ENCODE measurements at regions of chr19 and their contacts with region 1.

Region 1: DNA sequence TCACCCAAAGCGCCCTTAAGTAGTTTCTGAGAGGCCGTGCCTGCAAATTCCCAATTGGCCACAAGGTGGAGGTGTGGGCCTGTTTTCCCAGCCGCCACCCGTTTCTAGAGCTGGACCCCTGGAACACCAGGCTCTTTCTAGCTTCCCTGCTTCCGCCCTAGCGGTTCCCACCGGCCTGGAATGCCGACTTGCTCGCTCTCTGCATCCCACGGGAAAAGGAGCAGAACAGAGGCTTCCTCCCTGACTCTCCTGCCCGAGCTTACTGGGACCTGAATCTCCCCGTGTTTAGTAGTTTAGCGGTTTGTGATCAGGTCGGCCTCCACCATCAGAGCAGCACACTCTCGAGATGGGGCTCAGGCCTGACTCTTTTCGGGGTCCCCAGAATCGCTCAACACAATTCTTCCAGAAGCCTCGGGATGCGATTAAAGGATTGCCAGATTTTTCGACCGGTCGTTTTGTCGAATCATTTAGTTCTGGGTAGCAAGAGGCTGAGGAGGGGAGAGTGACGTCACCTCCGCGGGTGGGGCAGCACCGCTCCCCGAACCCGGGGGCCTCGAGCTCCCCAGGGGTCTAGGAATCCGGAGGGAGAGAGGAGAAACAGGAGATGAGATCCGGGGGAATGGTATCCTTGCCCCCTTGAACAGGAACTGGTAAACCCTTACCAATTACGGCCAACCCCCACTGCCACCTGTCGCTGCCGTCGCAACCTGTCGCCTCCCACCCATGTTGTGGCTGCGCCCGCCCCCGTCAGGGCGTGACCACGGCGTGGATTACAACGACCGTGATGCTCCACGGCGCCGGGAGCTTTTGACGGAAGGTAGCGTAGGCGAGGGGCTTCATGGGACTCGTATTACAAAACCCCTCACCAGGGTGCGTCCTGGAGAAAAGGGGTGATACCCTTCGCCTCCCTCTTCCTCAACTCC is 8.0 kb downstream of the NAPSA start:
- DNase-seq: peak; percentile 87
- ATAC-seq: peak; percentile 81
- H3K4me3 Mint-ChIP-seq: peak overlapping the region; percentile 93
- H3K27ac Mint-ChIP-seq: peak overlapping the region; percentile 98
- H3K4me1 Mint-ChIP-seq: peaks cover 32% of the 10 kb centered on the region
- H3K27me3 Mint-ChIP-seq: peaks cover 2% of the 10 kb centered on the region

Region 2: DNA sequence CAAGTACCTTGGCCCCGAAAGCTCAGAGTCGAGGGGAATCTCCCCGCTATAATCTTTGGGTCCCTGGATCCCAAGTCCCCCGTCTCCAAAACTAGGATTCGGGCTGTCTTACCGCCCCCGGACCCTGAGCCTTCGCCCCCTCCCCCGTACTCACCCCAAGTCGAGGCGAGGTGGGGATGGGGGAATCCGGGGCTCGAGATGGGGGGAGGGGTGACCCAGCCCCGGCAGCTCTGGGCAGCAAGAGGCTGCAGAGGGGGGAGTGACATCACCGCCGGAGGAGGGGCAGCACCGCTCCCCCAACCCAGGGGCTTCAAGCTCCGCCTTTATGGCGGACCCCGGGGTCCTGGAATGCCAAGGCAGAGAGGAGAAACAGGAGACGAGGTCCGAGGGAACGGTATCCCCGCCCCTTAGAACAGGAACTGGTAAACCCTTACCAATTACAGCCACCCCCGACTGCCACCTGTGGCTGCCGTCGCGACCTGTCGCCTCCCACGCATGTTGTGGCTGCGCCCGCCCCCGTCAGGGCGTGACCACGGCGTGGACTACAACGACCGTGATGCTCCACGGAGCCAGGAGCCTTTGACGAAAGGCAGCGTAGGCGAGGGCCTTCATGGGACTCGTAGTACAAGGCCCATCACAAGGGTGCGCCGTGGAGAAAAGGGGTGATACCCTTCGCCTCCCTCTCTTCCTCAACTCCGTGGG is 24.3 kb before region 1 on chr19:
- POLR2A ChIA-PET with region 1: interaction called, 12 read pairs
- DNase-seq: peak; percentile 88
- ATAC-seq: peak; percentile 72
- H3K4me3 Mint-ChIP-seq: peak overlapping the region; percentile 80
- H3K27ac Mint-ChIP-seq: peak overlapping the region; percentile 91
- H3K4me1 Mint-ChIP-seq: peaks cover 37% of the 10 kb centered on the region
- H3K27me3 Mint-ChIP-seq: peaks cover 29% of the 10 kb centered on the region

Region 3: GRCh38 chr19:50368649-50369570 is 11.5 kb after region 1 on chr19:
- POLR2A ChIA-PET with region 1: interaction called, 13 read pairs
- DNase-seq: peak; percentile 85
- ATAC-seq: peak; percentile 67
- H3K4me3 Mint-ChIP-seq: peak overlapping the region; percentile 92
- H3K27ac Mint-ChIP-seq: peak overlapping the region; percentile 92
- H3K4me1 Mint-ChIP-seq: peaks cover 31% of the 10 kb centered on the region
- H3K27me3 Mint-ChIP-seq: no peaks in the 10 kb centered on the region

Region 4: DNA sequence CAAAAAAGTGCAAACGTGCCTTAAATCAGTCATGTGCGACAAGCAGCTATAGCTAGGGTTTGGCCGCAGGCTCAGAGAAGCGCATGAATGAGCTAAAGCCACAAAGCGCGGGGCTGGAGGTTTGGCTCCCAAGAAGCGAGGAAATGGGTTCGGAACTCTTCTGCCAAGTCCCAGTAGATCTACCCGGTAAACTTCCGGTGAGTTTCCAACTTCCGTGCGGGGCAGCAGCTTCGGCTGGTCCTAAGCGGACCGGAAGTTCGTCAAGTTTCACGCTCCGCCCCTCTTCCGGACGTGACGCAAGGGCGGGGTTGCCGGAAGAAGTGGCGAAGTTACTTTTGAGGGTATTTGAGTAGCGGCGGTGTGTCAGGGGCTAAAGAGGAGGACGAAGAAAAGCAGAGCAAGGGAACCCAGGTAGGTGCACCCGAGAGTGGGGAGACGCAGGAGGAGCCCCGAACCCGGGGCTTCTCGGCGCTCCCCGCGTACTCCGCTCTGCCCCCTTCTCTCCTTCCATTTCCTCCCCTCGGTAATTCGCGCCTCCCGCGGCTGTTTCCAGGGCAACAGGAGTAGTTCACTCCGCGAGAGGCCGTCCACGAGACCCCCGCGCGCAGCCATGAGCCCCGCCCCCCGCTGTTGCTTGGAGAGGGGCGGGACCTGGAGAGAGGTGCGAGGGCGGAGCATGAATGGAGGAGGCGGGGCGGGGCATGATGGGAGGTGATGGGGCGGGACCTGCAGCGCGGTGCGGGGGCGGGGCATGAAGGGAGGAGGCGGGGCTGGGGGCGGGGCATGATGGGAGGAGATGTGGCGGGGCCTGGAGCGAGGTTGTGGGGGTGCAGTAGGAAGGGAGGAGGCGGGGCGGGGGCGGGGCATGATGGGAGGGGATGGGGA is 19.0 kb after region 1 on chr19 and contains the start of gene NR1H2:
- POLR2A ChIA-PET with region 1: interaction called, 13 read pairs
- DNase-seq: peak; percentile 91
- ATAC-seq: peak; percentile 88
- H3K4me3 Mint-ChIP-seq: peak within 1 kb of the TSS; percentile 92
- H3K27ac Mint-ChIP-seq: peak within 1 kb of the TSS; percentile 98
- H3K4me1 Mint-ChIP-seq: peaks cover 11% of the 10 kb centered on the region
- H3K27me3 Mint-ChIP-seq: no peaks in the 10 kb centered on the region
- total RNA-seq, gene NR1H2: 81.6 to 82.8 TPM

Region 5: GRCh38 chr19:50383852-50384684 is 26.6 kb after region 1 on chr19 and contains the start of gene POLD1:
- POLR2A ChIA-PET with region 1: interaction called, 19 read pairs
- DNase-seq: peak; percentile 99
- ATAC-seq: peak; percentile 85
- H3K4me3 Mint-ChIP-seq: peak within 1 kb of the TSS; percentile 93
- H3K27ac Mint-ChIP-seq: peak within 1 kb of the TSS; percentile 95
- H3K4me1 Mint-ChIP-seq: peaks cover 27% of the 10 kb centered on the region
- H3K27me3 Mint-ChIP-seq: no peaks in the 10 kb centered on the region
- total RNA-seq, gene POLD1: 131 to 143 TPM

Region 6: GRCh38 chr19:50461066-50461875 is 103.8 kb after region 1 on chr19:
- POLR2A ChIA-PET with region 1: interaction called, 10 read pairs
- DNase-seq: peak; percentile 70
- ATAC-seq: peak; percentile 77
- H3K4me3 Mint-ChIP-seq: no peak overlapping the region
- H3K27ac Mint-ChIP-seq: no peak overlapping the region
- H3K4me1 Mint-ChIP-seq: peaks cover 9% of the 10 kb centered on the region
- H3K27me3 Mint-ChIP-seq: peaks cover 6% of the 10 kb centered on the region

Measured in activated naive CD8-positive, alpha-beta T cell treated with anti-CD3 and anti-CD28 coated beads, Interleukin-2, amount 10 ng/mL, durations not matched to agents 7 days and 5 days (primary cell).